ENCODE measurements at regions of chr12 and their contacts with region 1.

Region 1: DNA sequence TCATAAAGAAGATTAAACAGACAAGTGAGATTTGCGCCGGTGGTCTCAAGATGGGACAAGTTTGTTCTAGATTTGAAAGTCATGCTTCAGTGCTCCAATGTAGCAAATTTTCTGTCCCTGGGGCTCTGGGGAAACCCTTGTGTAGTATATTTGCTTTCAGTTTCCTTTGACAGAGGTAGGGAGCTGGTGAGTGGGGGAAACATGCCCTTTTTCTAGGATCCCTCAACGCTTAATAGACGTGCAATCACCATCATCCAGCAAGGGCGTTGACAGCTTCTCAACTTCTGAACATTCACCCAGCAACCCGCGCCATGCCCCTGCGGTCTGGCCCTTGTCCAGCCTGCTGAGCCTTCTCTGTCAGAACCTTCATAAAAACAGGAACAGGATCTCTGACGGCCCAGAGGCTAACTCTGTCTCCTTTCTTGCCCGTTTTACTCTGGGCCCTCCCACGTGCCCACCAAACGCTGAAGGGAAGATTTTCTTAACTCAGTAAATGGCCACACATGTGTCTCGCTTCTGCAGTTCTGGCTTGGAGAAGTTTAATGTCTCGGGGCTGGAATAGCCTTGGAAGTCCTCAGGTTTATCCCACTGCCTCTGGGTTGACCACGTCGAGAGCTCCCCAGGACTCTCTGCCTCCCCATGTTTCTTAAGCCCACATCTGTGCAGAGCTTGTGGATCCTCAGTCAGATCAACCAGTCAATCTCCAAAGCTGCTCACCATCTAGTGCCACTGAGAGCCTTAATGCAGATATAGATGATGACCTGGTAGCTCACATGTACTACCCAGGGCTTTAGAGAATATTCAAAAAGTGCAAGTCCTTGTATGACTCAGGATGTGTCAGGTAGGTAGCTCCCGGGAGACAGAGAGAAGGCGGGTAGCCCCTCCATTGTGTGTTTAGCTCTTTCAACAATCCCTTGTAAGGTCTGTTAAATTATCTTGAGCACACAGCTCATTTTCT is 58.1 kb upstream of the CCND2 start:
- DNase-seq: peak; percentile 24
- H3K4me3 Mint-ChIP-seq: peak overlapping the region; percentile 65
- H3K27ac Mint-ChIP-seq: peak overlapping the region; percentile 83
- H3K4me1 Mint-ChIP-seq: peaks cover 49% of the 10 kb centered on the region
- H3K27me3 Mint-ChIP-seq: peaks cover 2% of the 10 kb centered on the region

Region 2: DNA sequence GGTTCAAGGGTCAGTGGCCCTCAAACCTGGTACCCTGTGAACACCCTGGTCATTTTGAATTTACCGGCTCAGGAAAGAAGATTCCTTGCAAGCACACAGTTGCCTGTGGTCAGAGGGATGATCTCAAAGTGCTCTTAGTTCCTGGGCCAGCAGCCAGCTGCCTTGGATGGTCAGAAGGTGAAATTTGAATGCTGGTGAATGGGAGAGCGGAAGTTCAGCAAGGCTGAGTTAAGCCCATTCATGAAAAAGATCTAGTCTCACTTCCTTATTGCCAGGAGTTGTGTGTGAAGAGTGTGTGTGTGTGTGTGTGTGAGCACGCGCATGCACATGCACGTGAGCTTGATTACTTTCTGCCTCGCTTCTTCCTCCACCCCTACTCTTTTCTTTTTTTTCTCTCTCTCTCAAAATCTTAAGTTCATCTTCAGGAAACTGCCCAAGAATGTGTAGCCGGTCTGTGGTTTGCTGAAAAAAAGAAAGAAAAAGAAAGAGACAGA is 97.4 kb before region 1 on chr12:
- intact Hi-C with region 1: loop called (anchors 5 kb)
- DNase-seq: no peak
- H3K4me3 Mint-ChIP-seq: peak overlapping the region; percentile 67
- H3K27ac Mint-ChIP-seq: peak overlapping the region; percentile 81
- H3K4me1 Mint-ChIP-seq: peaks cover 80% of the 10 kb centered on the region
- H3K27me3 Mint-ChIP-seq: no peaks in the 10 kb centered on the region

Region 3: DNA sequence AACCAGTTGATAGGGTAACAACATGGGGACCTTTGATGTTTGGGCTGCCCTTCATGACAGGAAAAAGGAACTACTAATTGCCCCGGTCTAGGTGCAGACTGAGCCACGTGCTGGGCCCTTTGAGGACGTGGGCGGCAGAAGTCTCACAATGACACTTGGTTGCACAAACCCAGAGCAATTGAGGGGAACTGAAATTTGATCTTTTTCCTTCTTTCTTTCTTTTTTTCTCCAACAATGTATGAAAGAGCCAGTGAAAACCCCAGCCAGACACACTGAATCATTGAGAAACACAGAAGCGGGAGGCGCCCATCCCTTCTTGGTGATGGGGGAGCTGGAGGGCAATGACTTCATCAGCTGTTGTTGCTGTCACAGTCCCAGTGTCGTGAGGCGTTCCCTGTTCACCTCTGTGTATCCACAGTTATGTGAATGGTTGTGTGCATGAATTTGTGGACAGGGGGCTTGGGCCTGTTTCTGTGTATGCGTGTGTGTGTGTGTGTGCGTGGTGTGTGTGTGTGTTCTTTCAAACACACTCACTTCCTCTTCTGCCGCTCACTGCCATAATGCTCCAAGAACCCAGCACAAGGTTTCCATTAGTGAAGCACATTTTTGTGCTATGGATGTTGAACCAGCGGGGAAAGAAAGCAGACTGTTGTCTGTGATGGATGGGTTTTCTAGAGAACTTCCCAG is 79.4 kb before region 1 on chr12:
- intact Hi-C with region 1: loop called (anchors 5 kb)
- DNase-seq: no peak
- H3K4me3 Mint-ChIP-seq: peak overlapping the region; percentile 27
- H3K27ac Mint-ChIP-seq: peak overlapping the region; percentile 79
- H3K4me1 Mint-ChIP-seq: peaks cover 58% of the 10 kb centered on the region
- H3K27me3 Mint-ChIP-seq: no peaks in the 10 kb centered on the region

Region 4: DNA sequence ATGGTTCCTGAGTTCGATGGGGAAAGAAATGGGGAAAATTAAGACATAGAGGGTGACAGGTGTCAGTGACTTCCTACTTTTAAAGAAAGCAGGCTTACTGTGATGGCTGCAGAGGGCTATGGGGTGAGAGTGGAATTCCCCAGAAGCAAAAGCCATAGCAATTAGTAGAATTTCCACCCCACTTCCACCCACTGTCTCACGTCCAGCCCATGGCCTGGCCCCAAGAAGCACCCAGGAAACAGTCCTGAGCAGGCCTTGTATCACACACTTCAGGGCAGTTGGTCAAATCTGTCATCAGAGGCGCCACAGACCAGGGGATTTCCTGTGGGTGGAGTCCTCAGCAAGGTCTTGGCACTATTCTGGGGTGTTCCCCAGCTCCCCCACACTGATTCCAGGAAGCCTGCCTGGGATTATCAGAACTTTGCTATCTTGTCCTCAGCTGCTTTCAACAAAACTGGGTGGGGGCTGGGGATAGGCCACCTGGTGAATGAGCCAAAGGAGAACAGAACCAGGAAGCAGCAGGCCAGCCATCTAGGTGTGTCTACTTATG is 62.1 kb before region 1 on chr12:
- intact Hi-C with region 1: loop called (anchors 2 kb)
- DNase-seq: peak; percentile 78
- H3K4me3 Mint-ChIP-seq: peak overlapping the region; percentile 63
- H3K27ac Mint-ChIP-seq: peak overlapping the region; percentile 94
- H3K4me1 Mint-ChIP-seq: peaks cover 88% of the 10 kb centered on the region
- H3K27me3 Mint-ChIP-seq: no peaks in the 10 kb centered on the region

Region 5: GRCh38 chr12:4269279-4269991 is 53.9 kb after region 1 on chr12:
- intact Hi-C with region 1: loop called (anchors 2 kb)
- DNase-seq: peak; percentile 91
- H3K4me3 Mint-ChIP-seq: peak overlapping the region; percentile 90
- H3K27ac Mint-ChIP-seq: peak overlapping the region; percentile 94
- H3K4me1 Mint-ChIP-seq: peaks cover 26% of the 10 kb centered on the region
- H3K27me3 Mint-ChIP-seq: peaks cover 9% of the 10 kb centered on the region